ENCODE measurements at regions of chr1 and their contacts with region 1.

Region 1: GRCh38 chr1:179081687-179082332 is at the start of gene TOR3A:
- DNase-seq: peak; percentile 76 to 95
- H3K4me3 ChIP-seq: peak within 1 kb of the TSS; percentile 74 to 84
- H3K27ac ChIP-seq: peak within 1 kb of the TSS; percentile 83 to 85
- H3K4me1 ChIP-seq: peaks cover 0 to 11% of the 10 kb centered on the region in 2 donors
- H3K27me3 ChIP-seq: no peaks in the 10 kb centered on the region
- CTCF ChIP-seq: peak in 1 of 3 experiments; percentile 2
- total RNA-seq, gene TOR3A: 109 TPM

Region 2: GRCh38 chr1:178220094-178220493 is 861.7 kb before region 1 on chr1:
- intact Hi-C with region 1: no loop called
- DNase-seq: no peak
- H3K4me3 ChIP-seq: no peak overlapping the region
- H3K27ac ChIP-seq: no peak overlapping the region
- H3K4me1 ChIP-seq: no peaks in the 10 kb centered on the region
- H3K27me3 ChIP-seq: no peaks in the 10 kb centered on the region
- CTCF ChIP-seq: no peak

Region 3: GRCh38 chr1:179121159-179121938 is 39.5 kb after region 1 on chr1:
- intact Hi-C with region 1: loop called (anchors 2 kb)
- DNase-seq: no peak
- H3K4me3 ChIP-seq: no peak overlapping the region
- H3K27ac ChIP-seq: peak overlapping the region in 1 of 2 donors; percentile 20
- H3K4me1 ChIP-seq: peaks cover 0 to 6% of the 10 kb centered on the region in 2 donors
- H3K27me3 ChIP-seq: no peaks in the 10 kb centered on the region
- CTCF ChIP-seq: peak; percentile 34 to 66 (median 44)

Region 4: GRCh38 chr1:179365320-179366092 is 283.7 kb after region 1 on chr1 and contains the start of gene AXDND1:
- intact Hi-C with region 1: loop called (anchors 1 kb)
- DNase-seq: peak; percentile 54 to 93
- H3K4me3 ChIP-seq: peak within 1 kb of the TSS; percentile 62 to 70
- H3K27ac ChIP-seq: peak within 1 kb of the TSS; percentile 84 to 95
- H3K4me1 ChIP-seq: peaks cover 0 to 6% of the 10 kb centered on the region in 2 donors
- H3K27me3 ChIP-seq: no peaks in the 10 kb centered on the region
- CTCF ChIP-seq: no peak
- total RNA-seq, gene AXDND1: not detected

Region 5: DNA sequence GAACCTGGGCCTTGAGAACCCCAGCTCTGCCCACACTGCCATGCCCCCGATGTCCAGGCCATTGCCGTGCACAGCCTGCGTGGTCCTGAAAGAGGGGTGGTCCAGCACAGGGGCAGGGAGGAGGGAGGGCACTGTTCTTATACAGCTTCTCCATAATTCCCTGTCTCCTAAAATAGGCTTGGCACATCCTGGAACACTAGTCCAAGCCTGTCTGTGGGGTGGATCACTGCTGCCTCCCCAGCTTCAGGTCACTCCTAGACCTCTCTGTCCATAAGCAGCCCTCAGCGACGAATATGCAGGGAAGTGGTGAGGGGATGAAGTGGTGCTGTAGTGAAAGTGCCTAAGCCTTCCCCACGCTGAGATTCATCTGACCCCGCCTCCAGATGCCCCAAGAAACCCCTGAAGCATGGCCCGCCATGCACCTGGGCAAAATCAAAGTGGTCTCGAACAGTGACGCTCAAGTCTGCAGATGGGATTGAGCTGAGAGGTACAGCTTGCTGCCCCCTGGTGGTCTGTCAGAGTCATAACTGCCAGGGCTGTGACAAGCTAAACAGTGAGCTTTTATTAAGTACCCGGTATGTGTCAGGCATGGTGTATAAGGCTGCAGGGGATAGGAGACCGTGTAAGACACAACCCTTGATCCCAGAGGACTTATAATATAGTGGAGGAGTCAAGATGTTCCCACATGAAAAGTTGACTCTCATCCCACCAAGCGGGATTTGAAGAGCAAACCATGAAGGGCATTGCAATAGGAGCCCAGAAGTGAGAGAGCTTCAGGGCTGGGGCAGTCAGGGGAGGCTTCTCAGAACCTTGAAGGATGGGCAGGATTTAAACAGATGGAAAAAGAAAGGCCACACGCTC is 727.9 kb after region 1 on chr1:
- intact Hi-C with region 1: loop called (anchors 5 kb)
- DNase-seq: peak in 1 of 2 donors; percentile 71
- H3K4me3 ChIP-seq: no peak overlapping the region
- H3K27ac ChIP-seq: no peak overlapping the region
- H3K4me1 ChIP-seq: peaks cover 0 to 5% of the 10 kb centered on the region in 2 donors
- H3K27me3 ChIP-seq: no peaks in the 10 kb centered on the region
- CTCF ChIP-seq: peak; percentile 71 to 86 (median 80)